CD4-positive, alpha-beta T cell (primary cell): ENCODE measurements at regions of chr7 and their contacts with region 1.

Region 1: GRCh38 chr7:99325545-99326407 is at the start of gene ARPC1A:
- DNase-seq: peak; percentile 83 to 97 (median 91)
- ATAC-seq: peak; percentile 94
- H3K4me3 ChIP-seq: peak within 1 kb of the TSS; percentile 90
- H3K4me3 Mint-ChIP-seq: peak within 1 kb of the TSS; percentile 94
- H3K27ac ChIP-seq: peak within 1 kb of the TSS; percentile 28 to 69
- H3K27ac Mint-ChIP-seq: peak within 1 kb of the TSS; percentile 85
- H3K4me1 ChIP-seq: peaks cover 42% of the 10 kb centered on the region
- H3K4me1 Mint-ChIP-seq: peaks cover 42% of the 10 kb centered on the region
- H3K27me3 ChIP-seq: no peaks in the 10 kb centered on the region
- H3K27me3 Mint-ChIP-seq: no peaks in the 10 kb centered on the region
- CTCF ChIP-seq: no peak
- total RNA-seq, gene ARPC1A: 25.3 to 30.4 TPM

Region 2: GRCh38 chr7:98878365-98879165 is 447.2 kb before region 1 on chr7 and contains the start of gene TRRAP:
- CTCF ChIA-PET with region 1: no interaction called
- POLR2A ChIA-PET with region 1: interaction called, 3 read pairs
- intact Hi-C with region 1: loop called in 1 of 2 experiments (anchors 10 kb)
- DNase-seq: peak; percentile 60 to 88 (median 70)
- ATAC-seq: peak; percentile 56
- H3K4me3 ChIP-seq: peak within 1 kb of the TSS; percentile 97
- H3K4me3 Mint-ChIP-seq: peak within 1 kb of the TSS; percentile 97
- H3K27ac ChIP-seq: peak within 1 kb of the TSS; percentile 87 to 91
- H3K27ac Mint-ChIP-seq: peak within 1 kb of the TSS; percentile 97
- H3K4me1 ChIP-seq: peaks cover 27% of the 10 kb centered on the region
- H3K4me1 Mint-ChIP-seq: peaks cover 31% of the 10 kb centered on the region
- H3K27me3 ChIP-seq: no peaks in the 10 kb centered on the region
- H3K27me3 Mint-ChIP-seq: no peaks in the 10 kb centered on the region
- CTCF ChIP-seq: peak; percentile 89
- total RNA-seq, gene TRRAP: 47.9 to 48.3 TPM

Region 3: GRCh38 chr7:99255463-99255862 is 70.3 kb before region 1 on chr7:
- CTCF ChIA-PET with region 1: no interaction called
- POLR2A ChIA-PET with region 1: no interaction called
- intact Hi-C with region 1: no loop called
- DNase-seq: no peak
- ATAC-seq: no peak
- H3K4me3 ChIP-seq: no peak overlapping the region
- H3K4me3 Mint-ChIP-seq: no peak overlapping the region
- H3K27ac ChIP-seq: no peak overlapping the region
- H3K27ac Mint-ChIP-seq: no peak overlapping the region
- H3K4me1 ChIP-seq: no peaks in the 10 kb centered on the region
- H3K4me1 Mint-ChIP-seq: no peaks in the 10 kb centered on the region
- H3K27me3 ChIP-seq: no peaks in the 10 kb centered on the region
- H3K27me3 Mint-ChIP-seq: no peaks in the 10 kb centered on the region
- CTCF ChIP-seq: no peak

Region 4: GRCh38 chr7:99539213-99539811 is 213.5 kb after region 1 on chr7:
- CTCF ChIA-PET with region 1: no interaction called
- POLR2A ChIA-PET with region 1: no interaction called
- intact Hi-C with region 1: no loop called
- DNase-seq: no peak
- ATAC-seq: no peak
- H3K4me3 ChIP-seq: no peak overlapping the region
- H3K4me3 Mint-ChIP-seq: no peak overlapping the region
- H3K27ac ChIP-seq: no peak overlapping the region
- H3K27ac Mint-ChIP-seq: no peak overlapping the region
- H3K4me1 ChIP-seq: no peaks in the 10 kb centered on the region
- H3K4me1 Mint-ChIP-seq: no peaks in the 10 kb centered on the region
- H3K27me3 ChIP-seq: no peaks in the 10 kb centered on the region
- H3K27me3 Mint-ChIP-seq: no peaks in the 10 kb centered on the region
- CTCF ChIP-seq: no peak

Region 5: DNA sequence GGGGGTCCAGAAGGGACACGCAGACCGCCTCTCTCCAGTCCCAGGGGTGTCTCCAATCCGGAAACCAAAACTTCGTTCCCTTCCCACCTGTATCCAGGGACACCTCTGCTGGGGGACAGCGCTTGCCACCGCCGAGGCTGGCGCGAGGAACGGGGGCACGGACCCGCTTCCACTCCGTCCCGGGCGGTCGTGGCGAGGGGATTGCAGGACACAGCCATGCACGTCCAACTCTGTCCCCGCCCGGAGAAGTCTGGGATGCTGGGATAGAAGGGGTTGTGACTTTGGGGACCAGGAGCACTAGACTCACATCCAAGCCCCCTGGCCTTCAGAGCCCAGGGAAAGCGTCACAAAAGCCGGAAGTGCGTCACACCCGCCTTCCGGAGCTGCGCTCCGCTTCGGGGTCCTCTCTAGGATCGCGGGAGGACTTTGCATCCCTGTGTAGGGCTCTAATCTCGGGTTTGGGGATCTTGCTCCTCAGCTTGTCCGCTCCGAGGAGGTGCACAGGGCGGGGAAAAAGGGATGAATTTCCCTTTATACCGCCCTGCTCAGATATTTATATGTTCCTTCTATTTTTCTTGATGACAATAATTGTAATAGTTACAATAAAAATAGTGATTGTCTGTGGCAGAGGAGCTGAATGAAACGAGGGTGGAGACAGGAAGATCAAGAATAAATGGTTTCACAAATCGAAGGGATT is 226.1 kb after region 1 on chr7 and contains the start of gene FAM200A:
- CTCF ChIA-PET with region 1: no interaction called
- POLR2A ChIA-PET with region 1: no interaction called
- intact Hi-C with region 1: loop called in 1 of 2 experiments (anchors 10 kb)
- DNase-seq: peak; percentile 70 to 95 (median 80)
- ATAC-seq: peak; percentile 98
- H3K4me3 ChIP-seq: peak within 1 kb of the TSS; percentile 97
- H3K4me3 Mint-ChIP-seq: peak within 1 kb of the TSS; percentile 92
- H3K27ac ChIP-seq: peak within 1 kb of the TSS; percentile 86 to 92
- H3K27ac Mint-ChIP-seq: peak within 1 kb of the TSS; percentile 80
- H3K4me1 ChIP-seq: peaks cover 33% of the 10 kb centered on the region
- H3K4me1 Mint-ChIP-seq: peaks cover 56% of the 10 kb centered on the region
- H3K27me3 ChIP-seq: no peaks in the 10 kb centered on the region
- H3K27me3 Mint-ChIP-seq: no peaks in the 10 kb centered on the region
- CTCF ChIP-seq: no peak
- total RNA-seq, gene FAM200A: 1.5 to 1.8 TPM